Caco-2 (cell line): ENCODE measurements at regions of chr1 and their contacts with region 1.

Region 1: GRCh38 chr1:192808518-192809306 is at the start of gene RGS2:
- DNase-seq: peak; percentile 93 to 94
- H3K4me3 ChIP-seq: peak within 1 kb of the TSS; percentile 49
- H3K4me3 Mint-ChIP-seq: peak within 1 kb of the TSS; percentile 97
- H3K27ac Mint-ChIP-seq: peak within 1 kb of the TSS; percentile 90
- H3K4me1 ChIP-seq: no peaks in the 10 kb centered on the region
- H3K4me1 Mint-ChIP-seq: peaks cover 20% of the 10 kb centered on the region
- H3K27me3 ChIP-seq: no peaks in the 10 kb centered on the region
- H3K27me3 Mint-ChIP-seq: no peaks in the 10 kb centered on the region
- CTCF ChIP-seq: peak; percentile 28 to 32
- total RNA-seq, gene RGS2: 5.1 and 5.9 TPM in 2 replicates

Region 2: DNA sequence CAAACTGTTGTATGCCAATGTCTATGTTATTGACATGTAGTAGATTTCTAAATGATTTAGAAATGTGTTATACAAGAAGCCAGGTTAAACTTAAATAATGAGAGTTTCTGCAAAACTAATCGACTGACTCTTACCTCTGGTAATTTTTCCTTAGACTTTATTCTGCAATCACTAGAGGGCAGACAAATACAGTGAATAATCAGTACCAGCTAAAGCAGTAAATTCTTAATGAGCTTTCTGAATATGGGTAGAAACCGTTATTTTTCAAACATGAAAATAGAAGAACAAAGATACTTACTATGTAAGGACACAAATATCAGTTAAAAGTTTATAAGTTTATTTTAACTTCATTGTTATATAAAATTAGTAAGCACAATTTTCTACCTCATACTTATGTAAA is 331.1 kb before region 1 on chr1:
- CTCF ChIA-PET with region 1: no interaction called
- POLR2A ChIA-PET with region 1: interaction called, 3 read pairs
- intact Hi-C with region 1: loop called (anchors 5 kb)
- DNase-seq: no peak
- H3K4me3 ChIP-seq: no peak overlapping the region
- H3K4me3 Mint-ChIP-seq: no peak overlapping the region
- H3K27ac Mint-ChIP-seq: no peak overlapping the region
- H3K4me1 ChIP-seq: no peaks in the 10 kb centered on the region
- H3K4me1 Mint-ChIP-seq: no peaks in the 10 kb centered on the region
- H3K27me3 ChIP-seq: no peaks in the 10 kb centered on the region
- H3K27me3 Mint-ChIP-seq: no peaks in the 10 kb centered on the region
- CTCF ChIP-seq: peak in 1 of 2 experiments; percentile 13

Region 3: DNA sequence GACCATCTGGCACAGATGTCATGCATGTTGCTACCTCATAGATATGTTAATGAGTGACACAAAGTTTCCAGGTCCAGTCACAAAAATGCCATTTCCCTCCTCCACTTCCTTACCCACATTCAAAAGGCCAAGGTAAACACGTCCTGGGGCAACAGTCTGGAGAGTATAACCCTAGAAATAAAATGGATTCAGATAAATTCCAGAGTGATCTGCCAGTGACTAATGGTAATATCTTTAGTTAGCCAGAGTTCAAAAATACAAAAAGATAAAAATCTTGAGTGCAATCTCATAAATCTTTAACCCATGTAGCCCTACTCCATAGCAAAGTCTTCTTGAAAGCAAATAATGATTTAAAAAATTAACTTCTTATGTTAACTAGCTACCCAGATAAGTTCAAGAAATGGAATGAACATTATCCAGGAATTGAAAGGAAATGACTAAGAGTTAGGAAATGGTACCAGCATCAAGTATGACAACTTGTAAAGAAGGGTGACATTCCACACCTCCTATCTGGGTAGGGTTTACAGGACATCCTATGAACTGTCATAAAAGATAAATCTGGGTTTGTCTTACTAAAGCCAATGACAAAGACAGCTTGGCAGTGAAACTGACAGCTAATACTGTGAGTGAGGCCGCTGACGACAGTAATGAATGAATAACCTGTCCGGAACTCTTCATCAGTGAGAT is 18.2 kb after region 1 on chr1:
- CTCF ChIA-PET with region 1: interaction called, 3 read pairs
- POLR2A ChIA-PET with region 1: interaction called, 4 read pairs
- intact Hi-C with region 1: loop called (anchors 1 kb)
- DNase-seq: peak; percentile 31 to 69
- H3K4me3 ChIP-seq: no peak overlapping the region
- H3K4me3 Mint-ChIP-seq: peak overlapping the region; percentile 9
- H3K27ac Mint-ChIP-seq: no peak overlapping the region
- H3K4me1 ChIP-seq: peaks cover 15% of the 10 kb centered on the region
- H3K4me1 Mint-ChIP-seq: peaks cover 13% of the 10 kb centered on the region
- H3K27me3 ChIP-seq: no peaks in the 10 kb centered on the region
- H3K27me3 Mint-ChIP-seq: no peaks in the 10 kb centered on the region
- CTCF ChIP-seq: no peak

Region 4: DNA sequence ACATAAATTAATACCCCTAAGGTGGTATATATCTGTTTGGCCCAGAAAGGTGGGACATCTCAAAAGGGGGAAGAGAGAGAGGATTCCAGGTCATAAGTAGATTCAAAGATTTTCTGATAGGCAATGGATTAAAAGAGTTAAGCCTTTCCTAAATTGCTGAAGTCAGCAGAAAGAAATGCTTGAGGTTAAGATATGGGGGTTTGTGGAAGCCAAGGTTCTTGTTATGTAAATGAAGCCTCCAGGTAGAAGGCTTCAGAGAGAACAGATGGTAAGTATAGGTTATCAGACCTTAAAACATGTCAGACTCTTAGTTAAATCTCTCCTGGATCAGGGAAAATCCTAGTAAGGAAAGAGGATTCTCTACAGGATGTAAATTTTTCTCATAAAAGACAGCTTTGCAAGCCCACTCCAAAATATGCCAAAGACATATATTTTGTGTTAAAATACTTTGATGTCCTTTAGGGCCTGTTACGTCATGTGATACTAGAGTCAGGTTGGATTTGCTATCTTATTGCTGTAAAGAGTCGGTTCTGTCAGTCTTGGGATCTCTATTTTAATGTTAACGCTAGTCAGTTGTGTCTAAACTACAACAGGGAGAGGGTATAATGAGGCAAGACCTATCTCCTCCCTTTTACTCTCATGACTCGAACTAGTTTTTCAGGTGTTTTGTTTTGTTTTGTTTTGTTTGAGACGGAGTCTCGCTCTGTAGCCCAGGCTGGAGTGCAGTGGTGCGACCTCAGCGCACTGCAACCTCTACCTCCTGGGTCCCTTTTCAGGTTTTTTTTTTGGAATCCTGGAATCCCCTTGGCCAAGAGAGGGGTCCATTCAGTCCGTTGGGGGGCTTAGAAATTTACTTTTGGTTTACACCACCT is 30.7 kb after region 1 on chr1:
- CTCF ChIA-PET with region 1: no interaction called
- POLR2A ChIA-PET with region 1: no interaction called
- intact Hi-C with region 1: no loop called
- DNase-seq: no peak
- H3K4me3 ChIP-seq: no peak overlapping the region
- H3K4me3 Mint-ChIP-seq: no peak overlapping the region
- H3K27ac Mint-ChIP-seq: no peak overlapping the region
- H3K4me1 ChIP-seq: 0 out of 2 replicates have a peak, but pooled peaks cover 8% of the 10 kb centered on the region
- H3K4me1 Mint-ChIP-seq: no peaks in the 10 kb centered on the region
- H3K27me3 ChIP-seq: no peaks in the 10 kb centered on the region
- H3K27me3 Mint-ChIP-seq: peaks cover 3% of the 10 kb centered on the region
- CTCF ChIP-seq: no peak

Region 5: GRCh38 chr1:192939440-192939839 is 130.7 kb after region 1 on chr1:
- CTCF ChIA-PET with region 1: no interaction called
- POLR2A ChIA-PET with region 1: interaction called, 4 read pairs
- intact Hi-C with region 1: loop called (anchors 2 kb)
- DNase-seq: peak in 1 of 2 experiments; percentile 9
- H3K4me3 ChIP-seq: no peak overlapping the region
- H3K4me3 Mint-ChIP-seq: no peak overlapping the region
- H3K27ac Mint-ChIP-seq: no peak overlapping the region
- H3K4me1 ChIP-seq: peaks cover 7% of the 10 kb centered on the region
- H3K4me1 Mint-ChIP-seq: peaks cover 5% of the 10 kb centered on the region
- H3K27me3 ChIP-seq: no peaks in the 10 kb centered on the region
- H3K27me3 Mint-ChIP-seq: no peaks in the 10 kb centered on the region
- CTCF ChIP-seq: no peak

Region 6: DNA sequence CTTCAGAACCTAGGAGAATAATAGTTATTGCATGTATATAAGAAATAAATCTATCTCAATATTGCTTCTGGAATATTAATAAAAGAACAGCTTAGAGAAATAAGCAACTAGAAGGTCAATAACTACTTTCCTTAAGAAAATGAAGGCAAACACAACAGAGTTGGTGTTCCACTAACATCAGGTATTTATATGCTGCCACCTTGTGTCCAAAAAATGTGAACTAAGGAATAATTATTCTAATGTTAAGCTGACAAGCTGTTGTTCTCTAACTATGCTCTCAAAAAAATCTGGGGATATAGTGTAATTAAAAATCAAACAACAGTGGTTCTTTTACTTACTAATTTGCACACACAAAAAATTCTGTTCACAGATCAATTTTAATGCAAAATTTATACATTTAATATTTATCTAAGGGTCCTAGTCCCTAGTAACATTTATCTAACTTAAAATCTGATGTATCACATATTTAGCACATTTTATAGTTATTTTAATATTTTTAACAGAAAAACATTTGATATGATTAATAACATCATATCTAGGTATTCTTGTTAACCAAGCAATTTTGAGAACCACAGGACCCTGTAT is 210.8 kb after region 1 on chr1:
- CTCF ChIA-PET with region 1: interaction called, 17 read pairs
- POLR2A ChIA-PET with region 1: interaction called, 3 read pairs
- intact Hi-C with region 1: loop called (anchors 1 kb)
- DNase-seq: peak in 1 of 2 experiments; percentile 63
- H3K4me3 ChIP-seq: no peak overlapping the region
- H3K4me3 Mint-ChIP-seq: no peak overlapping the region
- H3K27ac Mint-ChIP-seq: no peak overlapping the region
- H3K4me1 ChIP-seq: no peaks in the 10 kb centered on the region
- H3K4me1 Mint-ChIP-seq: no peaks in the 10 kb centered on the region
- H3K27me3 ChIP-seq: no peaks in the 10 kb centered on the region
- H3K27me3 Mint-ChIP-seq: no peaks in the 10 kb centered on the region
- CTCF ChIP-seq: peak; percentile 44 to 50

Region 7: DNA sequence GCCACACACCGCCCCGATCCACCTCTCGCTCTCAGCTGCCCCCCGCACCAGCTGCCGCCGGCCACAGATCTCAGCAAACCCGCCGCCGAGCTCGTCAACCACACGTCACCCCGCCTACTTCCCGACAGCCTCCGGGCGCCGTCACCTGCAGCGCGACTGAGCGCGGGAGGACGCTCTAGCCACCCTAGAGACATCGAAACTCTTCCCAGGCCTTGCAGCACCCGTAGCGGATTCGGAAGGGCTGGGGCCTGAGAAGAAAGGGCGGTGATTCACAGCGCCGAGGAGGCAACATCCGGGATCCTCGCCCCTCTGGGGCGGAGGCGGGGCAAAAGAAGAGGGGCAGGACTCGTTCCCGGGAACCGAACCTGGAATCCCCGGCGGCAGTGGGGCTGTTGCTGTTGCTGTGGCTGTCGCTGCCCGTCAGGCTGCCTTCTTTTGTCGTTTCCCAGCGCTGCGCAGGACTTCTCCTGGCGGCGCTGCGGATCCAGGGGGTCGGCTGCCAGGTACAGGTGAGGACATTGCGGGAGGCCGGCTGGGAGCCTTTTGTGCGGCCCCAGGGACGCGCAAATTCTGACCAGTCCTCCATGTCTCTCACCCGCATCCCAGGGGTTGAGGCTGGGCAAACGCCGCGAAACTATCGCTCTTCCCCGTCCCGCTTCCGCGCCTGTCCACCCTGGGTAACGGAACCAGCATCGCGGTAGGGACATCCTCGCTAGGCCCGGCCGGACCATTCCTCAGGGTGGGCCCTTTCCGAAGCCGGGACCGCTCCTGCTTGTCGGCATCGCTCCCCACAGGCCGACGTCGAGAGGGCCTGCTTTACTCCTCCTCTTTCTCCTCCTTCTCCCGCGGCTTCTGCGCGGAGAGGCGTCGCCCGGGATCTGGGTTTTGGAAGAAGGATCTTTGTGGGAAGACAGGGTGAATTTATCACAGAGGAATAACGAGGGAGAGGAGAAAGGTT is 250.8 kb after region 1 on chr1 and contains the starts of genes RO60 and UCHL5:
- CTCF ChIA-PET with region 1: no interaction called
- POLR2A ChIA-PET with region 1: no interaction called
- intact Hi-C with region 1: loop called (anchors 1 kb)
- DNase-seq: peak; percentile 96 to 98
- H3K4me3 ChIP-seq: peak within 1 kb of the TSS; percentile 70
- H3K4me3 Mint-ChIP-seq: peak within 1 kb of the TSS; percentile 90
- H3K27ac Mint-ChIP-seq: peak within 1 kb of the TSS; percentile 91
- H3K4me1 ChIP-seq: peaks cover 5% of the 10 kb centered on the region; the same call in 1 of the 2 replicates
- H3K4me1 Mint-ChIP-seq: peaks cover 15% of the 10 kb centered on the region
- H3K27me3 ChIP-seq: no peaks in the 10 kb centered on the region
- H3K27me3 Mint-ChIP-seq: no peaks in the 10 kb centered on the region
- CTCF ChIP-seq: peak in 1 of 2 experiments; percentile 21
- total RNA-seq, gene RO60: 49.2 and 50.0 TPM in 2 replicates
- total RNA-seq, gene UCHL5: 49.6 and 49.9 TPM in 2 replicates